PC-3 (cell line): ENCODE measurements at regions of chr15 and their contacts with region 1.

Region 1: DNA sequence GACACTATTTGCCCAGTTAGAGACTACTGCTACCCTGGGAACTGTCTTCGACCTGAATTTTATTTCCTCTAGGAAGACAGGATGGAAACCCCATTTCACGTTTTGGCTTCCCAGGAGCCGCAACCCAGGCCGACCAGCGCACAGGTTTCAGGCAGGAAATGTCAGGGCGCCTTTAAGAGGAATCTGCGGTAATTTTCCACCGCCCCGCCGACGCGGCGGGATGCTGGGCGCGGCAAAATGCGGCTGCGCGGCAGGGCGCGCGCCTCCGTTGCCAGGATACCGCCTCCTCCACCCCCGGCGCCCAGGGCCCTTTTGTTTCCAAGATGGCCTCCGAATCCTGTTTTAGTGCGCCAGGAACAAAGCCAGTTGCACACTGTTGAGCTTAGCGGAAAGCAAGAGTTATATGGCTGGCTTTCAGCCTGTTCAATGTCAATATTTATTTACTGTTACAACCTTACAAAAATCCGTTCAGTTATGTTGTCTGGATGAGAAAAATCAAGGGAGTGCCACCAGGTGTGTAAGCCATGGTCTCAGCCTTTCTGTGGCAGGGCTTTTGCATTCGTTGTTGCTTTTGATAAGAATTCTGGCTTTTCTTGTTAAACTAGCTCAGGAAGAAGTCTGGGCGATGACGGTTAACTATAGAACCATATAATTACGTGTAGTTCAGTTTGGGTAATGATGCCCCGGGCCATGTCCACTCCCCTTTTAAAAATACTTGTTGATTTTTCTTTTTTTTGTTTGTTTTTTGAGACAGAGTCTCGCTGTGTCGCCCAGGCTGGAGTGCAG is 79.7 kb upstream of the CHD2 start:
- DNase-seq: peak; percentile 94
- ATAC-seq: peak; percentile 76
- H3K4me3 ChIP-seq: peak overlapping the region; percentile 62
- H3K27ac ChIP-seq: peak overlapping the region; percentile 96
- H3K4me1 ChIP-seq: peaks cover 43% of the 10 kb centered on the region
- H3K27me3 ChIP-seq: no peaks in the 10 kb centered on the region
- CTCF ChIP-seq: no peak

Region 2: DNA sequence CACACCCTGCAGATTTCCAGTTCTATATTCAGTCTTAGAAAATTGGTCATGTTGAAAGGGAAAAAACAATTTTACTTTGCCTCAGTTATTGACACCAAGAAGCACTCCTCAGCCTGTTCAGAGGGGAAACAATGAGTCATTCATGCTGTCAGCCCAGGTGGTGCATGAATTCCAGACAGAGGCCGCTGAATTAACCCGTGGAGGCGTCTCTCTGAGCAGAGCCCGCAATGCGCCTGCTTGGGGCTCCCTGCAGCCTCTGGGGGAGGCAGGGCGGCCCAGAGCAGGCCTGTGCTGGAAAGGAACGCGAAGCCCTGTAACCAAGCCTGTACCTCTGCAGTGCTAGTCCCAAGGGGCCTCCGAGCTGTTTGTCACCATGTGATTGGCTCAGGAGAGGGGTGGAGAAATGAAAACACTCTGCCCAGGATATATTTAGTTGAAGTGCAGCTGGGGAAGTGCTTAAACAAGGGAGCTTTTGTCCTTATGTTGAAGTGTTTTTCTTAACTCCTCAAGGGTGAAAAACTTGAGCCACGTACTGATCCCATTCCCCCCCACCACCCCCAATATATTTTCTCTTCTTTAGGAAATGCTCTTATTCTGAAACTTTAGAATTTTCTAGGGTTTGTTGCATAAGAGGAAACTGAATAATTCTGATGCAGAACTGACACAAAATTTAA is 11.4 kb after region 1 on chr15:
- CTCF ChIA-PET with region 1: no interaction called
- POLR2A ChIA-PET with region 1: interaction called, 7 read pairs
- intact Hi-C with region 1: loop called (anchors 1 kb)
- DNase-seq: peak; percentile 88
- ATAC-seq: peak; percentile 99
- H3K4me3 ChIP-seq: peak overlapping the region; percentile 43
- H3K27ac ChIP-seq: peak overlapping the region; percentile 84
- H3K4me1 ChIP-seq: peaks cover 25% of the 10 kb centered on the region
- H3K27me3 ChIP-seq: no peaks in the 10 kb centered on the region
- CTCF ChIP-seq: no peak

Region 3: GRCh38 chr15:92881802-92882696 is 61.6 kb after region 1 on chr15:
- CTCF ChIA-PET with region 1: no interaction called
- POLR2A ChIA-PET with region 1: interaction called, 29 read pairs
- intact Hi-C with region 1: loop called (anchors 1 kb)
- DNase-seq: peak; percentile 99
- ATAC-seq: peak; percentile 93
- H3K4me3 ChIP-seq: peak overlapping the region; percentile 65
- H3K27ac ChIP-seq: peak overlapping the region; percentile 61
- H3K4me1 ChIP-seq: peaks cover 24% of the 10 kb centered on the region
- H3K27me3 ChIP-seq: no peaks in the 10 kb centered on the region
- CTCF ChIP-seq: no peak

Region 4: DNA sequence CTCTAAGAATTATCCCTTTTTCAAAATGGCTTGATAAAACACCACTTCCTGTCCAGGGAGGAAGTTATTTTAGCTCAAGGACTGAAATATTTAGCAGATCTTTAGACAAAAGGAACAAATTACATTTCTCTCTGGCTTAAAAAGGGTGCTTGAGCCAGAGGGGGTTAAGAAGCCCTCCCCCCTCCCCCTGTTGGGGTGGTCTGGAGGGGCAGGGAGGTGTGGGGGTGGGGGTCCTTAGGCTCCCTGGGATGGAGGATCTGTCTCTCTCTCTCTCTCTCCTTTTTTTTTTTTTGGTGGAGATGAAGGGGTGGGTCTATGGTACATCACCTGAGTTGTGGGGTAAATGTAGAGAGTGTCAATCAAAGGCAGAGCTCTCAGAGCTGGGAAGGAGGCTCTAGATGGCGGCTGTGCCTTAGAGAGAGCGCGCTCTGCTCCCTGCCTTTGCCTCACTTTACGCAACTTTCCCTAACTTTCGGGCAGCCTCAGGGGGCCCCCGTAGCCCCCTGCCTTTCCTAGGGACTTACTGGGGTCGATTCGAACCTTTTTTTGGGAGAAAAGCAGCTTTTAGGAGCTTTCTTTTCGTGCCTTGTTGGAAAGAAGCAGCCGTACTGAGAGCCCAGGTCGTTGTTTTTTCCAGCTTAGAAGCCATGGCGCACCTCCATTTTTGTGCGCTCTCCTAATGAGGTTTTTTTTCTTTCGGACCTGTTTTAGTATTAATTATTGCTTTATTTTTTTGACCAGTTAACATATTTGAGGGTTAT is 79.7 kb after region 1 on chr15 and contains the start of gene CHD2:
- CTCF ChIA-PET with region 1: interaction called, 4 read pairs
- POLR2A ChIA-PET with region 1: interaction called, 11 read pairs
- intact Hi-C with region 1: no loop called
- DNase-seq: peak; percentile 86
- ATAC-seq: peak; percentile 66
- H3K4me3 ChIP-seq: peak within 1 kb of the TSS; percentile 95
- H3K27ac ChIP-seq: peak within 1 kb of the TSS; percentile 91
- H3K4me1 ChIP-seq: peaks cover 17% of the 10 kb centered on the region
- H3K27me3 ChIP-seq: no peaks in the 10 kb centered on the region
- CTCF ChIP-seq: no peak
- total RNA-seq, gene CHD2: 42.7 and 50.6 TPM in 2 replicates